ENCODE measurements at regions of chr15 and their contacts with region 1.

Region 1: GRCh38 chr15:42273102-42273899 is at the starts of genes GANC and TMEM87A:
- DNase-seq: peak; percentile 97 to 98 (median 98)
- ATAC-seq: peak; percentile 98 to 99 (median 98)
- H3K4me3 ChIP-seq: peak within 1 kb of the TSS; percentile 61 to 84 (median 68)
- H3K27ac ChIP-seq: peak within 1 kb of the TSS; percentile 90 to 99 (median 96)
- H3K4me1 ChIP-seq: peaks cover 11 to 57% (median 39%) of the 10 kb centered on the region in 12 donors
- H3K27me3 ChIP-seq: no peaks in the 10 kb centered on the region
- CTCF ChIP-seq: peak in 1 of 12 donors; percentile 14
- POLR2A ChIP-seq: peak in 1 of 2 donors; percentile 71
- total RNA-seq, gene GANC: 8.8 to 30.2 (median 17.4) TPM
- total RNA-seq, gene TMEM87A: 17.2 to 30.8 (median 19.9) TPM

Region 2: GRCh38 chr15:42385206-42385979 is 112.1 kb after region 1 on chr15:
- intact Hi-C with region 1: loop called in 1 of 10 experiments (anchors 10 kb)
- DNase-seq: no peak
- ATAC-seq: peak in 3 of 4 donors; percentile 64 to 73 (median 64)
- H3K4me3 ChIP-seq: no peak overlapping the region
- H3K27ac ChIP-seq: peak overlapping the region in 5 of 12 donors; percentile 47 to 69 (median 55)
- H3K4me1 ChIP-seq: peaks cover 0 to 32% (median 11%) of the 10 kb centered on the region in 12 donors
- H3K27me3 ChIP-seq: no peaks in the 10 kb centered on the region
- CTCF ChIP-seq: peak; percentile 26 to 64 (median 48)
- POLR2A ChIP-seq: no peak

Region 3: GRCh38 chr15:42457445-42458442 is 184.4 kb after region 1 on chr15:
- intact Hi-C with region 1: loop called in 1 of 10 experiments (anchors 5 kb)
- DNase-seq: peak; percentile 67 to 90 (median 86)
- ATAC-seq: peak; percentile 93 to 95 (median 94)
- H3K4me3 ChIP-seq: peak overlapping the region; percentile 6 to 62 (median 52)
- H3K27ac ChIP-seq: peak overlapping the region; percentile 73 to 92 (median 82)
- H3K4me1 ChIP-seq: peaks cover 0 to 56% (median 30%) of the 10 kb centered on the region in 12 donors
- H3K27me3 ChIP-seq: no peaks in the 10 kb centered on the region
- CTCF ChIP-seq: no peak
- POLR2A ChIP-seq: peak in 1 of 2 donors; percentile 80

Region 4: GRCh38 chr15:42495361-42496212 is 222.3 kb after region 1 on chr15 and contains the start of gene SNAP23:
- intact Hi-C with region 1: loop called in 1 of 10 experiments (anchors 10 kb)
- DNase-seq: peak; percentile 93 to 96 (median 95)
- ATAC-seq: peak; percentile 91 to 97 (median 96)
- H3K4me3 ChIP-seq: peak within 1 kb of the TSS; percentile 43 to 87 (median 74)
- H3K27ac ChIP-seq: peak within 1 kb of the TSS; percentile 82 to 97 (median 93)
- H3K4me1 ChIP-seq: peaks cover 0 to 87% (median 41%) of the 10 kb centered on the region in 12 donors
- H3K27me3 ChIP-seq: no peaks in the 10 kb centered on the region
- CTCF ChIP-seq: no peak
- POLR2A ChIP-seq: peak; percentile 17 to 89
- total RNA-seq, gene SNAP23: 29.9 to 74.8 (median 43.3) TPM

Region 5: DNA sequence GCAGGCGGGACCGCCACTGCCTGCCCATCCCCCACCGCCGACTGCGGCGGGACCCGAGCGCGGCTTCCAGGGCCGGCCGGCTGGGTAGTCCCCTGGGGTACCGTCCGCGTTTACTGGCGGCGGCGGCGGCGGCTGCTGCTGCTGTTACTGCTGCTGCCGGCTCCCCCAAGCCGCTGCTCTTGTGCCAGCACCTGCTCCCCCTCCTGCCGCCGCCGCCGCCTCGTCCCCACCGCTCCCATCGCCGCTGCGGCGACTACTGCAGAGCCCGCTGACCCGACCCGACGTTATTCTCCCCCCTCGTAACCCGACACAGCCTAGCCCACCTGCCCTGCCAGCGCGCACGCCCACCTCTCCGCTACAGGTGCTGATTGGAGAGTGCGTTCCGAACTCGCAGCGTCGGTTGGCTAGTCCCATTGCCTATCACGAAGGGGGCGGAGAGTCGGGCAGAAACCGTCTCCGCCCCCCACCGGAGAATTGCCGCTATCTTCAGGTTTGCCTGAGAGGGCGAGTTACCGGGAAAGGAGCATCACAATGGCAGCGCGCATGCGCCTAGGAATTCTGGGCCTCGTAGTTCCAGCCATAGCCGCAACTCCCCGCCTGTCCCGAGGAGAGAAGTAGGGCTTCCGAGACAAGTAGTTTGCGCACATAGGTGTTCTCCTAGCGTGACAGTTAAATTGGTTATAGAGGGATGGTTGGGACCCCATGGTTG is 647.4 kb after region 1 on chr15 and contains the start of gene TTBK2:
- intact Hi-C with region 1: loop called in 1 of 10 experiments (anchors 5 kb)
- DNase-seq: peak; percentile 99
- ATAC-seq: peak; percentile 99 to 100 (median 99)
- H3K4me3 ChIP-seq: peak within 1 kb of the TSS; percentile 67 to 98 (median 94)
- H3K27ac ChIP-seq: peak within 1 kb of the TSS; percentile 69 to 93 (median 90)
- H3K4me1 ChIP-seq: peaks cover 0 to 41% (median 16%) of the 10 kb centered on the region in 12 donors
- H3K27me3 ChIP-seq: no peaks in the 10 kb centered on the region
- CTCF ChIP-seq: peak in 6 of 12 donors; percentile 12 to 43 (median 27)
- POLR2A ChIP-seq: peak; percentile 62 to 96
- total RNA-seq, gene TTBK2: 15.1 to 27.9 (median 21.5) TPM

Measured in heart left ventricle (tissue), 16 donors.